HEK293 (cell line): ENCODE measurements at regions of chr19 and their contacts with region 1.

Region 1: DNA sequence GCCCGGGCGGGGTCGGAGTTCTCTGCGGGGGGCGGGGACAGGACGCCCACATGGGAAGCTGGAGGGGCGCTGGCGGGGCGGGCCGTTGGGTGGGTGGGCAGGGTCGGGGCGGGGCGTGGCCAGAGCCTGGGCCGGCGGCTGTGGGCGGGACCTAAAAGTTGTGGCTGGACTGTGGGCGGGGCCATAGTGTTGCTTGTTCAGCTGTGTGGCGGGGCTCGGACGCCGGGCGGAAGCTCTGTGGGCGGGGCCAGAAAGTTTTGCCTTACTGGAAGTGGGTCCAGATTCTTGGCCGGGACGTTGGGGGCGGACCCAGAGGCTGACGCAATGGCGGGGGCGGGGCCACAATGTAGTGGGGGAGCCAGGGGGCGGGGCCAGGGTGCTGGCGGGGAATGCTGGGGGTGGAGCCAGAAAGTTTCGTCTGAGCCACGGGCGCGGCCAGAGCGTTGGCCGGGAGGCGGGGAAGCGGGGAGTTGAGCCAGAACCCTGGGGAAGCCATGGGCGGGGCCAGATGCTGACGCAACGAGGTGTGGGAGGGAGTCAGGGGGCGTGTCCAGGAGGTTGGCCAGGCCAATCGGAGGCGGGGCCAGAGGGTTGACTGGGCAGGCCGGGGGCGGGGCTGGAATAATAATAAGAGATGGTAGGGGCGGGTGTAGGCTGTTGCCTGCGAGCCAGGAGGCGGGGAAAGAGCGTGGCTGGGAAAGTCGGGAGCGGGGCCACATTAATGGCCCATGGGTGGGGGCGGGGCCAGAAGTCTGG is 541 bp downstream of the CCDC9 start:
- H3K4me3 ChIP-seq: peak overlapping the region; percentile 70
- H3K27ac ChIP-seq: peak overlapping the region; percentile 67
- H3K4me1 ChIP-seq: peaks cover 19% of the 10 kb centered on the region
- CTCF ChIP-seq: no peak

Region 2: DNA sequence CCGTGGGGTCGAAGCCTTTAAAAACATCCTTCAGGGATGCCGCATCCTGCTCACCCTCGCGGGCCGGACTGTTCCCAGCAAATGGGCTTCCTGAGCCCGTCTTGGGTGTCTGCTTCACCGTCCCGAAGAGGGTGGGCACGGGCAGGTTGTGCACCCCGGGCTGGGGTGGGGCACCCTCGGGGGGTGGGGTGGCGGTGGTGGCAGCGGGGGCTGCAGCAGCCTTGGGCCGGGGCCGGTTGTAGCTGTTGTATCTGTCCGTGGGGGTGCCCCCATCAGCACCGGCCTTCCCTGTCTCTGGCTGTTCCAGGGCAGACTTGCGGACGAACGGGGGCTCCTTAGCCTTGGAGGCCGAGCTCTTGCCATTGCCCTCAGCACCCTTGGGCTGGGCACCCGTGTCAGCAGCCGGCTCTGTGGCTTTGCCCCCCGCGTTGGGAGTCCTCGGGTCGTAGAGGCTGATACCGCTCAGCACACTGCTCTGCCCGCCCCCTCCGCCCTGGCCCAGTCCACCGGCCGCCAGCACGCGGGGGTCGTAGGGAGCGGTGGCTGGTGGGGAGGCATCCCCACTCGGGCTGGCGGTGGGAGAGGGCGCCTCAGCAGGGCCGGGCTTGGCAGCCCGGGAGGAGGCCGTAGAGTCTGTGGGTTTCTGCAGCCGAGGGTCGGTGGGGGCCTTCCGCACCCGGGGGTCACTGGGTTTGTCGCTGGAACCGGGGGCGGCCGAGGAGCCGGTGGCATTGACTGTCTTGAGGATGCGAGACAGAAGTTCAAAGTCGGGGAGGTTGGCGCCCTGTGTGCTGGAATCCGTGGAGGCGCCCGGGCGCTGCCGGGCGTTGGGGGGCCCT is 190.3 kb before region 1 on chr19:
- CTCF ChIA-PET with region 1: no interaction called
- POLR2A ChIA-PET with region 1: no interaction called
- H3K4me3 ChIP-seq: no peak overlapping the region
- H3K27ac ChIP-seq: no peak overlapping the region
- H3K4me1 ChIP-seq: no peaks in the 10 kb centered on the region
- CTCF ChIP-seq: no peak

Region 3: DNA sequence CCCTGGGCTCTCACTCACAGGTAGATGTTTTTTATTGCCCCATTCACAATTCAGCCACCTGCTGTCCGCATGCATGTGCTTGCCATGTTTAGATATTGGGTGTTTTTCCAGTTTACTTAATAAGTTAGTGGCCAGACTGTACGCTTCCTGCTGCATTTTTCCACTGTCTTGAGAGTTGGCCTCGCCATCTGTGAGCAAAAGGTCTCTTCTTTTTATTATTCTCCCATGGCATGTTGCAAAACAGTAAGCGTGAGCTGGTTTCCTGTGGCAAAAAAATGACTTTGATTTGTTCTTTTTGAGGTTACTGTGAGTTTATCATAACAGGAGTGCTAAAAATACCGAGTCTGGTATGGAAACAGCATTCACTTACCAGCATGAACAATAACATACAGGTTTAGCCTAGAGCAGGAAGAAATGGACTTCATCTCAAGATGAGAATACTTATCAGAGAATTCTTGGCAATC is 80.2 kb before region 1 on chr19:
- CTCF ChIA-PET with region 1: no interaction called
- POLR2A ChIA-PET with region 1: no interaction called
- H3K4me3 ChIP-seq: no peak overlapping the region
- H3K27ac ChIP-seq: no peak overlapping the region
- H3K4me1 ChIP-seq: no peaks in the 10 kb centered on the region
- CTCF ChIP-seq: no peak

Region 4: GRCh38 chr19:47267350-47267759 is 10.5 kb after region 1 on chr19:
- CTCF ChIA-PET with region 1: interaction called, 4 read pairs
- POLR2A ChIA-PET with region 1: interaction called, 36 read pairs
- H3K4me3 ChIP-seq: no peak overlapping the region
- H3K27ac ChIP-seq: no peak overlapping the region
- H3K4me1 ChIP-seq: no peaks in the 10 kb centered on the region
- CTCF ChIP-seq: no peak

Region 5: GRCh38 chr19:47273313-47273977 is 16.6 kb after region 1 on chr19:
- CTCF ChIA-PET with region 1: interaction called, 6 read pairs
- POLR2A ChIA-PET with region 1: interaction called, 108 read pairs
- H3K4me3 ChIP-seq: peak overlapping the region; percentile 58
- H3K27ac ChIP-seq: peak overlapping the region; percentile 97
- H3K4me1 ChIP-seq: peaks cover 11% of the 10 kb centered on the region
- CTCF ChIP-seq: no peak

Region 6: GRCh38 chr19:47398707-47399597 is 142.1 kb after region 1 on chr19:
- CTCF ChIA-PET with region 1: no interaction called
- POLR2A ChIA-PET with region 1: no interaction called
- H3K4me3 ChIP-seq: no peak overlapping the region
- H3K27ac ChIP-seq: no peak overlapping the region
- H3K4me1 ChIP-seq: no peaks in the 10 kb centered on the region
- CTCF ChIP-seq: no peak

Region 7: DNA sequence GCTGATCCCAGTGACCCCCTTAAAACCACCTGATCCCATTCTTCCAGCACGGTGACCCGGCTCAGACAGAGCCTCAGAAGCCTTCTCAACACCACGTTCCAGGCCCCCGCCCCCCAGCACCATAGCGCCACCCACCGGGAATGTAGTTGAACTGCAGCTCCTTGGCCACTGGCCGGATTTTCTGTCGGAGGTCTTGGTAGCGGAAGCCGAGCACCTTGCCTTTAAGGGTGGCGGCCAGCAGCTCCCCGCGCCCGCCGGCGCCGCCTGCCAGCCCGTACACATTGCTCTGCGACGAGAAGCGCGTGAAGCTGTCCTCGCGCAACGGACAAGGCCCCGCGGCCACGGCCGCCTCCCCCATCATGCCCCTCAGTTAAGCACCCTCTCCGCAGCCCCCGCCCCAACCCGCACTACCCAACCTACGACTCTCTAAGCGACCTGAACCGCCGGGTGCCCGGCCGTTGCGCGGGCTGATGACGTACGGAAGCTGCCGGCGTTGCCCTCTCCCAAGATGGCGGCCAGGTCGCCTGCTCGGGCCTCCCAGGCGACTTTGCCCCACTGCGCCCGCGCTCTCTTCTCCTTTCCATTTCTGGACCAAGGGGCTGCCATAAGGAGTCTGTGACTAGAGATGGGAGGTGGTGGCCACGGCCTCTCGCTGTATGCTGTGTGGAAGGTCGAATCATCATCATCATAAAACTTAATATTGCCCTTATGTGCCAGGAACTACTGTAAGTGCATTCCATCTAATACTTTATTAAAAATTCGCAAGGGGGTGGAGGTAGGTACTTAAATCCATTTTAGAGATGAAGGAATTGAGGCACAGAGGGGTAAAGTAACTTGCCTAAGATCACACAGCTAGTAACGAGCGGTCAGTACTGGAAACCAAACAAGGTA is 227.2 kb after region 1 on chr19 and contains the start of gene KPTN:
- CTCF ChIA-PET with region 1: no interaction called
- POLR2A ChIA-PET with region 1: no interaction called
- H3K4me3 ChIP-seq: peak within 1 kb of the TSS; percentile 85
- H3K27ac ChIP-seq: peak within 1 kb of the TSS; percentile 79
- H3K4me1 ChIP-seq: no peaks in the 10 kb centered on the region
- CTCF ChIP-seq: peak; percentile 99